Left cardiac atrium (tissue), 4 donors: ENCODE measurements at regions of chr12 and their contacts with region 1.

Region 1: DNA sequence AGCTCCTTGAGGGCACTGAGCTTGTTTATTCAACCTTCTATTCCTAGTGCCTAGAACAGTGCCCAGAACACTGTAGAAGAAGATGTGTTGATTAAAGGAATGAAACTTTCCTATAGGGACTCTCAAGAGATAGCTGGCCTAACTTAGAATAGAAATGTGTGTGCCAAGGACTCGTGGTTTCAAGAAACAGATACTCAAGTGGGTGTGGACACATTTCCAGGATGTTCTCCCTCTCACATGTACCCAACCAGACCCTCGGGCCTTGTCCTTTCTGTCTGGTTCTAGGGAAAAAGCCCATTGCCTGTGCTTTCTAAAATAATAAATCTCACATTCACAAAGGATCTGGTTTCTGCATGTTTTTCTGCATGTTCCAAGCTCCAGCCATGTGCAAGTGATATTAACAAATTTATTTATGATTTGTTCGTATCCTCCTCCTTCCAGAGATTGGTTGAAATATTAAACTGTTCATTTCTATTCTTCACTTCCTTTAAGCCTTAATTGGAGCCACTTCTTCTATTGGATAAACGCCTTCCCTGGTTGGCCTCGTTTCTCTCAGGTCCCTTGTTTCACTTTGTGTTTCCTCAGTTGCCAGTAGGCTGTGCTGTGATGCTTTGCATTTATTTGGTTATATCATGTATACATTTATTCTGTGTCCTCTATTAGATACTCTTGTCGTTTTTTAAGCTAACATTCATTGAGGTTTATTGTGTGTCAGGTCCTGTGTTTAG is 89.8 kb downstream of the CRADD start:
- DNase-seq: no peak
- ATAC-seq: peak; percentile 84 to 90

Region 2: GRCh38 chr12:93494096-93494495 is 272.9 kb before region 1 on chr12:
- intact Hi-C with region 1: no loop called
- DNase-seq: no peak
- ATAC-seq: no peak

Region 3: DNA sequence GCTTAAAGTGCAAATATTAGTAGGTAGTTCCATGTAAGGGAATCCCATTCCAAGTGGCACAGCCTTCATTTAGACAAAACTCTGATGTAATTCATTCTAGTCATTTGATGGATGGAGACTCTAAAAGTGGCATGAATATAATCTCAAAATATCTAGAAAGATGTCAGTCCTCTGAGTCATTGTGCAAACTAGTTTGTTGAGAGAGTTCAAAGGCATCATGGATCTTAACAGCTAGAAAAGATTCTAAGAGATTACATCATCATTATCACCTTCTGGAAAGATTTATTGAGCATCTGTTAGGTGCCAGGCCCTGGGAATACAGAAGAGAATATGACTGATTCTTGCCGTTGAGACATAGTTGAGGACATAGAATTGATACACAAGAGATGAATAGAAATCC is 59.1 kb before region 1 on chr12:
- intact Hi-C with region 1: no loop called
- DNase-seq: no peak
- ATAC-seq: no peak

Region 4: GRCh38 chr12:93979189-93979588 is 212.2 kb after region 1 on chr12:
- intact Hi-C with region 1: loop called (anchors 5 to 10 kb)
- DNase-seq: no peak
- ATAC-seq: peak in 1 of 2 donors; percentile 18

Region 5: GRCh38 chr12:94101738-94102660 is 335.0 kb after region 1 on chr12:
- intact Hi-C with region 1: loop called in 1 of 2 experiments (anchors 2 kb)
- DNase-seq: peak; percentile 89
- ATAC-seq: peak; percentile 86 to 92